Activated CD4-positive, alpha-beta memory T cell treated with anti-CD3 and anti-CD28 coated beads for 36 hours (primary cell): ENCODE measurements at regions of chr15 and their contacts with region 1.

Region 1: DNA sequence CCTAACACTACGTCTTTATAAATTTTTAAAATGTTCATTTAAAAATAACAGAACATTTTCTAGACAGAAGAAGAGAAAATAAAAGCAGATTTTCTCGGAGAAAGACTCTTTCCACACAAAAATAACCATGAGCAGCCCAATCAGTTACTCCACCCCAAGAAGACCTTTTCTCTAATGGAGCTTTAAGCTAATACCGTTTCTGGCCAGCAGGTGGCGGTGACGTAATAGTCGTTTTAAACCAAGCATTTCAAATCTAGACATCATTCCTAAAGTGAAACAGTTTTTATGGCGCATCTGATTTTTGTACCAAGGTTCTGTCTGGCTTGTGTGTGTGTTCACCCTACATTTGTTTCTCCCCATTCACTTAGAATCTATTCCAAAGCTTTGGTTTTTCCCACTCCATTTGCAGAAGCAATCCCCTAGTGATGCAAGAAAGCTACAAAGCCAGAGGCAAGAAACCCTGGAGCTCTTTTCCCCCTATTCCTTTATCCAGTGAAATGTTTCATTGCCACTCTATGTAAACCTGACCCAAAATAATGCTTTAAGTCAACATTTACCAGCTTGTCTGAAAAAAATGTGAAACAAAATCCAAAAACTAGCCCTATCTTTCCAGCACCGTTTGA is 336.7 kb upstream of the IGF1R start:
- DNase-seq: peak; percentile 77
- H3K4me3 Mint-ChIP-seq: no peak overlapping the region
- H3K27ac Mint-ChIP-seq: no peak overlapping the region
- H3K4me1 Mint-ChIP-seq: no peaks in the 10 kb centered on the region
- H3K27me3 Mint-ChIP-seq: peaks cover 9% of the 10 kb centered on the region

Region 2: DNA sequence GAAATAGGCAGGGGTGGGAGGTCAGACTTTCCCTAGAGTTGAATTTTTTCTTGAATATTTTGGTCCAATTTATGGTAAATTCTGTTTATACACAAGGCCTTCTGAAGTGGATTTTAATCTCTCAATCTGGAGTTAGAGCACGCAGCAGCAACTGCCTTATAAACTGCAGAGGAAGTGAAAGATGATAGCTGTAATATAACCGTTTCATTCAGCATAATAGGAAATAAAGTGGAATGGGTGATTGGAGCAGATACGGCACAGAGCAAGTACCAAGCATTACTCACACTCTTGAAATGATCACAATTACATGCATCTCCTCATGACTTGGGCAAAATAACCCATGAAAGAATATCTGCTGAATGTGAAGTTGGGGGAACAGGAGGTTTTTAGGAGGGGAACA is 244.3 kb before region 1 on chr15:
- CTCF ChIA-PET with region 1: no interaction called
- POLR2A ChIA-PET with region 1: no interaction called
- intact Hi-C with region 1: no loop called
- DNase-seq: no peak
- H3K4me3 Mint-ChIP-seq: no peak overlapping the region
- H3K27ac Mint-ChIP-seq: no peak overlapping the region
- H3K4me1 Mint-ChIP-seq: no peaks in the 10 kb centered on the region
- H3K27me3 Mint-ChIP-seq: peaks cover 1% of the 10 kb centered on the region

Region 3: GRCh38 chr15:98333251-98333650 is 21.6 kb after region 1 on chr15:
- CTCF ChIA-PET with region 1: interaction called, 14 read pairs
- POLR2A ChIA-PET with region 1: no interaction called
- intact Hi-C with region 1: no loop called
- DNase-seq: no peak
- H3K4me3 Mint-ChIP-seq: no peak overlapping the region
- H3K27ac Mint-ChIP-seq: no peak overlapping the region
- H3K4me1 Mint-ChIP-seq: no peaks in the 10 kb centered on the region
- H3K27me3 Mint-ChIP-seq: no peaks in the 10 kb centered on the region

Region 4: GRCh38 chr15:98421419-98422129 is 109.9 kb after region 1 on chr15:
- CTCF ChIA-PET with region 1: interaction called, 46 read pairs
- POLR2A ChIA-PET with region 1: no interaction called
- intact Hi-C with region 1: loop called (anchors 1 kb)
- DNase-seq: peak; percentile 66
- H3K4me3 Mint-ChIP-seq: no peak overlapping the region
- H3K27ac Mint-ChIP-seq: no peak overlapping the region
- H3K4me1 Mint-ChIP-seq: peaks cover 7% of the 10 kb centered on the region
- H3K27me3 Mint-ChIP-seq: peaks cover 43% of the 10 kb centered on the region

Region 5: DNA sequence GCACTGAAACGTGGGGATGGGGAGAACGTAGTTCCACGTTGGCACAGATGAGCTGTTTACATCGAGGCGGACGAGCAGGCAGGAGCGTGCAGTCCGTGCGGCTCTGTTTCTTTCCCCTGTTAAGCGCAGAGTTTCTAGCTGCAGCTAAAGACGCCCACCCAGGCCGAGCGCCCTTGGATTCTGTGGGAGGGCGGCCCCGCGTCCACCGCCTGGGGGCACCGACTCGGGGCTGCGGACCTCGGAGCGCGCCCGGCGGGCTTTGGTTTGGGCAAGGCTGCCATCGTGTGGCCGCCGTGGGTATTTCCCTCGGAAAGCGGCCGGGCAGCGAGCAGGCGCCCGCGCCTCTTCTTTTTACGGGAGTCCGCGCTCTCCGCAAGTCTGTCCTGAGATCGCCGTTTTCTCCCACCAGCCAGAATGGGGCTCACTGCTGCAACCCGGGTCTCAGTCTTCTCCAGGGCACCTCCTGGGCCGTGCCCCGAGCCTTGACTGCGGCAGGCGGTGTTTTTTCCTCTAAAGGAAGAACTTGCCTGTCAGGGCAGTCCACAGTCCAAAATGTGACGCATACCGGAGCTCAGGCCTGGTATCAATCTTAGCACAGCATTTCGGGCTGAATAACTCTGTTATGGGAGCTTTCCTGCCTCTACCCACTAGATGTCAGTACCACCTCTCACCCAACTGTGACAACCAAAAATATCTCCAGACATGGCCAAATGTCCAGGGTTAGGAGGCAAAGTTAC is 116.7 kb after region 1 on chr15:
- CTCF ChIA-PET with region 1: interaction called, 25 read pairs
- POLR2A ChIA-PET with region 1: no interaction called
- intact Hi-C with region 1: loop called (anchors 1 kb)
- DNase-seq: peak; percentile 65
- H3K4me3 Mint-ChIP-seq: no peak overlapping the region
- H3K27ac Mint-ChIP-seq: no peak overlapping the region
- H3K4me1 Mint-ChIP-seq: peaks cover 5% of the 10 kb centered on the region
- H3K27me3 Mint-ChIP-seq: peaks cover 34% of the 10 kb centered on the region